Ascending aorta (tissue), 2 donors: ENCODE measurements at regions of chr11 and their contacts with region 1.

Region 1: GRCh38 chr11:75248690-75249268 is 8.2 kb downstream of the TPBGL start:
- DNase-seq: peak; percentile 34 to 93
- H3K4me3 ChIP-seq: no peak overlapping the region
- H3K27ac ChIP-seq: no peak overlapping the region
- H3K4me1 ChIP-seq: no peaks in the 10 kb centered on the region
- H3K27me3 ChIP-seq: no peaks in the 10 kb centered on the region
- CTCF ChIP-seq: peak; percentile 96 to 99 (median 97)

Region 2: DNA sequence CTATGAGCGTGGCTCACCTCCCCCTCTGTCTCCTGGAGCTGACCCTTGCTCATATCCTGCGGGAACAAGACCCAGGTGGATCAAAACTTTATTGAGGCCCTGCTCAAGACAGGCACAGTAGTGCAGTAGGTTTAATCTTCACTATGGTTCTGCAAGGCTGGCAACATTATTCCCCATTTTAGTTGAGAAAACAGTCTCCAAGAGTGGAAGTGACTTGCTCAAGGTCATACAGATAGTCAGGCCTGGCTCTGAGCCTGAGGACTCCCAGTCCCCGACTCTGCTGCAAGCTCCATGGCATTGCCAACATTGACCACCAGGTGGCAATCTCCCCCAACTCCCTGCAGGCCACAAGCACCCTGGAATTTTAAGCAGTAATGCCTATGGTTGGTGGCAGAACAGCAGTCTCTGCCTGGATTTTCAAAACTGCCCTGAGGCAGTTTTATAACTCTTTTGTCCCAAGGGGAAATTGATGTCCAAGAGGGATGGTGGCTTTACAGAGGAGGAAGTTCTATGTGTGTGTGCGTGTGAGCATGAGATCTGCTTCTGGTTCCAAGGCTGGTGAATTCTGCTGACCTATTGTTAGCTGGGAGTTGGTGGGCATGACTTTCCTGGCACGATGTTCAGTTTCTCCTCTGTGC is 225.9 kb before region 1 on chr11:
- intact Hi-C with region 1: loop called (anchors 1 kb)
- DNase-seq: peak; percentile 17 to 76
- H3K4me3 ChIP-seq: no peak overlapping the region
- H3K27ac ChIP-seq: no peak overlapping the region
- H3K4me1 ChIP-seq: no peaks in the 10 kb centered on the region
- H3K27me3 ChIP-seq: no peaks in the 10 kb centered on the region
- CTCF ChIP-seq: peak; percentile 79 to 88 (median 84)

Region 3: GRCh38 chr11:75140269-75141138 is 108.3 kb before region 1 on chr11:
- intact Hi-C with region 1: loop called (anchors 1 kb)
- DNase-seq: peak in 1 of 2 donors; percentile 72
- H3K4me3 ChIP-seq: no peak overlapping the region
- H3K27ac ChIP-seq: no peak overlapping the region
- H3K4me1 ChIP-seq: no peaks in the 10 kb centered on the region
- H3K27me3 ChIP-seq: no peaks in the 10 kb centered on the region
- CTCF ChIP-seq: peak; percentile 64 to 80 (median 75)

Region 4: GRCh38 chr11:75639762-75640181 is 391.0 kb after region 1 on chr11:
- intact Hi-C with region 1: no loop called
- DNase-seq: peak; percentile 26 to 78
- H3K4me3 ChIP-seq: peak overlapping the region in 1 of 2 donors; percentile 38
- H3K27ac ChIP-seq: no peak overlapping the region
- H3K4me1 ChIP-seq: peaks cover 0 to 14% of the 10 kb centered on the region in 2 donors
- H3K27me3 ChIP-seq: no peaks in the 10 kb centered on the region
- CTCF ChIP-seq: no peak

Region 5: GRCh38 chr11:75667831-75668450 is 419.2 kb after region 1 on chr11:
- intact Hi-C with region 1: no loop called
- DNase-seq: peak in 1 of 2 donors; percentile 68
- H3K4me3 ChIP-seq: peak overlapping the region; percentile 66 to 74
- H3K27ac ChIP-seq: peak overlapping the region; percentile 48 to 54
- H3K4me1 ChIP-seq: peaks cover 0 to 14% of the 10 kb centered on the region in 2 donors
- H3K27me3 ChIP-seq: no peaks in the 10 kb centered on the region
- CTCF ChIP-seq: no peak